ENCODE measurements at regions of chr14 and their contacts with region 1.

Region 1: DNA sequence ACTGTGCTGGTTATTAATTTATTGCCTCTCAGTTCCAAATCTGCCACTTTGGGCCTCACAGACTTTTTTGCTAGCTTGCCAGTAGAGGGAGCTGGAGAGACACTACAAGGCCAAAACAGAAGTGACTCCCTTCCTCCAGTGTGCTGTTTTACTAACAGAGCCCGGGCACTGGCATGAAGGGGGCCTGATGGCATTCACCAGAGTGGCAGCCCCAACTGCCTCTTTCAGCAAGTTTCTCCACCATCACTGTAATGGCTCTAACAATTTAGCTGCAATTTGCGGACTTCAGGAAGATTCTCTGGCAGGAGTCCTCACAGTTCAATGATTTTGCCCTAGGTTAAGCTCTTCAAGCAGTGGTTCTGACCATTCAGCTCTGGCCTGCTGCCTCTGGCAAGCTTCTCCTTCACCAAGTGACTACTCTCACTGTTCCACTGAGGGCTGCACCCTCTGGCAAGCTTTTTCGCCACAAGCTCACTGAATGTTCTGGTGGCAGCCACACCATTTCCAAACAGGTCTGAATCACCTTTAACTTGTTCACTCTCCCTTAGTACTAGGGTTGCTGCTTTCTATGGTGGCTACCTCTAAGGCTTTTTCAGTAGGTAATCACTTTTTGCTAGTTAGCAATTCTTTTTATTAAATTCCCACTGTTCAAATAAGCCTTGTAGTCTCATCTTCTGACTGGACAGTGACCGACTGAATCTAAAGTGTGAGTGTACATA is 104.9 kb downstream of the ZC3H14 start:
- DNase-seq: peak in 4 of 5 donors; percentile 31 to 39 (median 37)
- ATAC-seq: peak in 3 of 4 donors; percentile 78 to 84 (median 79)
- H3K4me3 ChIP-seq: no peak overlapping the region
- H3K27ac ChIP-seq: no peak overlapping the region
- H3K4me1 ChIP-seq: peaks cover 0 to 9% (median 0%) of the 10 kb centered on the region in 12 donors
- H3K27me3 ChIP-seq: no peaks in the 10 kb centered on the region
- CTCF ChIP-seq: peak; percentile 57 to 84 (median 78)
- POLR2A ChIP-seq: no peak

Region 2: DNA sequence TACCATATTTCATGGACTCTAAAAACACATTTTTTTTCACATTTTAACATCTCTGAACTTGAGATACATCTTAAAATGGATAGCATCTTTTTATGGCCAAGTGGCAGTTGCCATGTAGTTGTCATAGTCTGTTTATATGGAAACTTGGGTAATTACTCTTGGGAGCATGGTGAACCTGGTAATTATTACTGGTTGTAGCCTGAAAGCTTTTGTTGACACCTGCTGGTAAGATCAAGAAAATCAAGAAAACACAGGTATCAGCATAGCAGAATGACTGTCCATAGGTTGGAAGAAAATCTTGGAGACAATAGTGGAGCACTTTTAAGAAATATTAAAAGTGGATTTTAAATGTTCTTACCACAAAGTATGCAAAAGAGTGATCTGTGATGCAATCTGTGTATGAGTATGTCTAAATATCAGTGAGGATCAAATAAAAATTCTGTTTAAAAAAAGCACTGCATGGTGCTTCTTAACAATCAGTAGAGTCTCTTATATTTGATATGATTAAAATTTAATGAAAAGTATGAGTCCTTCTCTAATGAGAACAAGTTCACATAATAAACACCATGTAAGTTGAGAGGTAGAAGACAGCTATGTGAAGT is 200.9 kb after region 1 on chr14:
- intact Hi-C with region 1: loop called in 8 of 10 experiments (anchors 5 to 10 kb)
- DNase-seq: no peak
- ATAC-seq: no peak
- H3K4me3 ChIP-seq: no peak overlapping the region
- H3K27ac ChIP-seq: no peak overlapping the region
- H3K4me1 ChIP-seq: no peaks in the 10 kb centered on the region
- H3K27me3 ChIP-seq: no peaks in the 10 kb centered on the region
- CTCF ChIP-seq: peak in 10 of 12 donors; percentile 7 to 46 (median 29)
- POLR2A ChIP-seq: no peak

Region 3: DNA sequence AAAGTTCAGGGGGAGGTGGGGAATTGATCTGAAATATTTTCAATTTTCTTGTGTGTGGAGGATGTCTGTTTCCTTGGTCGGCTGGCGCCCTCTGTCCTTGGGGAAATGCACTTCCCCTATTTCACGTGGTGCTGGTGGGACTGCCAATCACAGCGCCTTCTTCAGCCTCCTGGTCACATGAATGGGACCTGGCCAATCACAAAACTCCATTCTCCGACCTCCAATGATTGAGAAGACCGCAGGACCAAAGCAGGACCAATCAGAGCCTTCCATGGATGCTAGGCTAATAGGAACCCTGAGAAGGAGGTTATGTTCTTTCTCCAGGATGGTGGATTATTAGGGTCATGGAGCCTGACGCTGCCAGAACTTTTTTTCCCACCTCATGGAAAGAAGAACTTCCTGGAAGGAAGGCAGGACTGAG is 345.4 kb after region 1 on chr14:
- intact Hi-C with region 1: loop called in 4 of 10 experiments (anchors 5 to 10 kb)
- DNase-seq: no peak
- ATAC-seq: peak in 1 of 4 donors; percentile 29
- H3K4me3 ChIP-seq: no peak overlapping the region
- H3K27ac ChIP-seq: no peak overlapping the region
- H3K4me1 ChIP-seq: no peaks in the 10 kb centered on the region
- H3K27me3 ChIP-seq: peaks cover 0 to 4% (median 0%) of the 10 kb centered on the region in 9 donors
- CTCF ChIP-seq: no peak
- POLR2A ChIP-seq: no peak